ENCODE measurements at regions of chr7 and their contacts with region 1.

Region 1: GRCh38 chr7:99990460-99990852 is 14.6 kb upstream of the AZGP1 start:
- DNase-seq: no peak
- ATAC-seq: no peak
- H3K4me3 ChIP-seq: peak overlapping the region in 6 of 10 donors; percentile 0 to 31 (median 24)
- H3K27ac ChIP-seq: no peak overlapping the region
- H3K4me1 ChIP-seq: peaks cover 0 to 35% (median 20%) of the 10 kb centered on the region in 9 donors
- H3K27me3 ChIP-seq: peaks cover 0 to 7% (median 0%) of the 10 kb centered on the region in 7 donors
- CTCF ChIP-seq: no peak

Region 2: DNA sequence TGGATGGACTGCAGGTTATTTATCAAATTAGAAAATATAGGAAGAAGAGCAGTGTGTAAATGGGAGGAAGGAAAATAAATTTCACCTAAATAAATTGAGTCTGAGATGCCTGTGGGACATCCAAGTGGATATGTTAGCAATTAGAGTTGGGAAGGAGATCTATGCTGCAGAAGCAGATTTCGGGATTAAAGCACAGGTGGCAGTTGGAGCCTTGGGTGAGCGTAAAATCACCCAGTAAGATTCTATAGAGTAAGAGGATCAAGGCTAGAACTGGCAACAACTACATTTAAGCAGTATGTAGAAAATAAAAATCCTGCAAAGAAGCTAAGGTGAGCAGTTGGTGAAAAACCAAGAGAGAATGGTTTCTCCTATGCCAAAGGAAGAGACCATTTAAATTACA is 79.5 kb before region 1 on chr7:
- intact Hi-C with region 1: loop called in 8 of 10 experiments (anchors 2 to 10 kb)
- DNase-seq: no peak
- ATAC-seq: no peak
- H3K4me3 ChIP-seq: no peak overlapping the region
- H3K27ac ChIP-seq: no peak overlapping the region
- H3K4me1 ChIP-seq: peaks cover 0 to 14% (median 2%) of the 10 kb centered on the region in 9 donors
- H3K27me3 ChIP-seq: no peaks in the 10 kb centered on the region
- CTCF ChIP-seq: no peak

Region 3: DNA sequence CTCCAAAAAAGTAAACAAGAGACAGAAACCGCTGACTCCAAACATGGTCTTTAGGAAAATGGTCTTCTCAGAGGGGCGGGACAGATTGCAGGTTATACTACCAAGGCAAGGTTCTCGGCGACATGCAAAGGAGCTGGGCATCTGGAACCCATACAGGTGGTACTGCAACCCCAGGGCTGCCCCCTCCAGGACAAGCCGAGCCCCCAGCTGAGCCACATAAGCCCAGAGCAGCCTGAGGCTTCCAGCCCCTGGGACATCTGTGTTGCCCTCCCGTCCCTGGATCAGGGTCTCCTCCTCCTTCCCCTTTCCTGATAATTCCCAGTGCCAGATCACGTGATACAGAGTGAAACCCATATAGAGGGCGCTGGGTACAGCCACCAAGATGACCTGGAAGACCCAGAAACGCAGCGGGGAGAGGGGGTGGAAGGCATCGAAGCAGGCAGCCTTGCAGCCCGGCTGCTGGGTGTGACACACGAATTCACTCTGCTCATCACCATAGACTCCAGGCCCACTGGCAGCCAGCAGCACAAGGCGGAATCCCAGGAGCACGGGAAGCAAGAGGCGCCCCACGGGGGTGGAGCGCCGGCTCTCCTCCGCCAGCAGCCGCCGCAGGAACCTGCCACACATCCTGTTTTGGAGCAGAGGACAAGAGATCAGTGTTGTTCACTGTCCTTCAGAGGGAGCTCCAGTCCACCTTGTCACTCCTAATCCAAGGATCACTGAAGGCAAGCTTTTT is 61.3 kb before region 1 on chr7 and contains the start of gene GJC3:
- intact Hi-C with region 1: loop called in 2 of 10 experiments (anchors 5 to 10 kb)
- DNase-seq: peak; percentile 68 to 73
- ATAC-seq: peak; percentile 93 to 100 (median 96)
- H3K4me3 ChIP-seq: peak within 1 kb of the TSS in 8 of 10 donors; percentile 8 to 50 (median 42)
- H3K27ac ChIP-seq: peak within 1 kb of the TSS; percentile 14 to 79 (median 70)
- H3K4me1 ChIP-seq: peaks cover 4 to 21% (median 11%) of the 10 kb centered on the region in 9 donors
- H3K27me3 ChIP-seq: peaks cover 0 to 18% (median 0%) of the 10 kb centered on the region in 7 donors
- CTCF ChIP-seq: peak; percentile 12 to 75 (median 55)
- total RNA-seq, gene GJC3: 0.44 TPM in 1 of 10 donors, not detected in the others

Region 4: GRCh38 chr7:100081535-100082102 is 91.2 kb after region 1 on chr7 and contains the start of gene ZNF3:
- intact Hi-C with region 1: loop called in 6 of 10 experiments (anchors 1 to 10 kb)
- DNase-seq: peak; percentile 98 to 99
- ATAC-seq: peak; percentile 96 to 98 (median 96)
- H3K4me3 ChIP-seq: peak within 1 kb of the TSS; percentile 71 to 99 (median 90)
- H3K27ac ChIP-seq: peak within 1 kb of the TSS; percentile 65 to 96 (median 89)
- H3K4me1 ChIP-seq: peaks cover 7 to 42% (median 35%) of the 10 kb centered on the region in 9 donors
- H3K27me3 ChIP-seq: no peaks in the 10 kb centered on the region
- CTCF ChIP-seq: peak; percentile 85 to 99 (median 95)
- total RNA-seq, gene ZNF3: 14.1 to 17.8 (median 15.3) TPM

Region 5: DNA sequence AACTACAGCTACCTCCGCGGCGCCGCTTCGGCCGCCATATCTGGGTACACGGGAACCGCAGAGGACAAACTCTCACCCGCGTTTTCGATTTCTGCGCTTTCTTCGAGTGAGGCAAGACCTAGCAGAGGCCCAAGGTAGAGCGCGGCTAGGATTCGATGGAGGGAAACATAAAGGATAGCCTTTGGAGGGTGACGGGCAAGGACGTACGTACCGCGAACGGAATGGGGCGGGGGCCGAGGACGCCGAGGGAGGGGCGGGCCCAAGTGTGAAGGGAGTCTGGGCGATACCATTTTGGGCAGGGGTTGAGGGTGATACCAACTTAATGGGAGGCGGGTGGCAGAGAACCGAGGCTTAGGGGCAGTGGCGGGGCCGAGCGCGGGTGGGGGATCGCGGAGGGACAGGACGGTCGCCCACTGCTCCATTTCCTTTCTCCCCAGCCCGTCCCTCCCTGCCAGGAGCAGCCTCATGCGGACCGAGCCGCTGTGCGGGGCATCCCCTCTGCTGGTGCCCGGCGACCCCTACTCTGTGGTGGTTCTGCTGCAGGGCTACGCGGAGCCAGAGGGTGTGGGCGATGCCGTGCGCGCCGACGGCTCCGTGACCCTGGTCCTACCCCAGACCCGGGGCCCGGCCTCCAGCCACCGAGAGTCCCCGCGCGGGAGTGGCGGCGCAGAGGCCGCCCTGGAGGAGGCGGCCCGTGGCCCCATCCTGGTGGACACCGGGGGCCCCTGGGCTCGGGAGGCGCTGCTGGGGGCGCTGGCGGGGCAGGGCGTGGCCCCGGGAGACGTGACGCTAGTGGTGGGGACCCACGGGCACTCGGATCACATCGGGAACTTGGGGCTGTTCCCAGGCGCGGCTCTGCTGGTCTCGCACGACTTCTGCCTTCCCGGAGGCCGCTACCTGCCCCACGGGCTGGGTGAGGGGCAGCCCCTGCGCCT is 136.7 kb after region 1 on chr7 and contains the start of gene MBLAC1:
- intact Hi-C with region 1: loop called in 7 of 10 experiments (anchors 5 kb)
- DNase-seq: peak; percentile 85 to 93
- ATAC-seq: peak; percentile 92 to 97 (median 96)
- H3K4me3 ChIP-seq: peak within 1 kb of the TSS; percentile 81 to 98 (median 94)
- H3K27ac ChIP-seq: peak within 1 kb of the TSS; percentile 82 to 98 (median 96)
- H3K4me1 ChIP-seq: peaks cover 11 to 43% (median 22%) of the 10 kb centered on the region in 9 donors
- H3K27me3 ChIP-seq: no peaks in the 10 kb centered on the region
- CTCF ChIP-seq: peak in 1 of 9 donors; percentile 3
- total RNA-seq, gene MBLAC1: 1.2 to 3.5 (median 2.0) TPM

Measured in heart right ventricle (tissue), 16 donors.